Tibial artery (tissue), 4 donors: ENCODE measurements at regions of chr17 and their contacts with region 1.

Region 1: GRCh38 chr17:82648166-82648668 is at the start of gene WDR45B:
- DNase-seq: peak; percentile 94 to 97
- H3K4me3 ChIP-seq: peak within 1 kb of the TSS; percentile 91 to 92
- H3K27ac ChIP-seq: peak within 1 kb of the TSS; percentile 97 to 98
- H3K4me1 ChIP-seq: peaks cover 0 to 39% (median 23%) of the 10 kb centered on the region in 4 donors
- H3K27me3 ChIP-seq: no peaks in the 10 kb centered on the region
- CTCF ChIP-seq: no peak

Region 2: DNA sequence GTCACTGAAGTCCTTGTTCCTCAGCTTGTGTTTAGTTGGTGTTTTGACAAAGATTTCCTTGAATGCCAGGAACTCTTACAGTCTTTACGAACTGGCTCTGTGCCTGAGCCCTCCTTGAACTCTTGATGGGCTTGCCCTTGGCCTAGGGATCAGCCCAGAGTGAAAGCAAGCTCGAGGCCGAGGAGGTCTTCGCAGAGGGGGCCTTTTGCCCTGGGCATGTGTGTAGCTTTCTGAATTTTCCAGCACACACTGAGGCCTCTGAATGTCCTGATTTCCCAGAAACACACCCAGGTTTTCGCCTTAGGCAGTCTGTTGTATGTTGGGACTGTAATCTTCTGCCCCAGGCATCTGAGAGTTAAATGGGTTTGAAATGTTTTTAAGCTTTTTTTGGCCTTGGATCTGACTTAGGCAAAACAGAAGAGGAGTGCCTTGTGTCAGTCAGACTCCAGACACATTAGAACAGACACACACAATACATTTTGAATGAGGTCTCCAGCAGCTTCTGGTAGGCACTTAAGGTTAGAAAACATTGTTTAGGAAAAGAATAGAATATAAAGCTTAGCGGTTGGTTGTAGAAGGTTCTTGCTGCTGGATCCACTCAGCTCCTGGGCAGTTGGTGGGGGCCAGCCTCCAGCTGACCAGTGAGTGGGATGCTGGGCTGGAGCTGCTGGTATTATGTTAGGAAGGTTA is 111.6 kb before region 1 on chr17:
- intact Hi-C with region 1: no loop called
- DNase-seq: peak in 1 of 2 donors; percentile 63
- H3K4me3 ChIP-seq: peak overlapping the region; percentile 11 to 36
- H3K27ac ChIP-seq: peak overlapping the region; percentile 86 to 96
- H3K4me1 ChIP-seq: peaks cover 5 to 83% (median 50%) of the 10 kb centered on the region in 4 donors
- H3K27me3 ChIP-seq: no peaks in the 10 kb centered on the region
- CTCF ChIP-seq: no peak

Region 3: GRCh38 chr17:82611140-82612058 is 36.8 kb before region 1 on chr17:
- intact Hi-C with region 1: no loop called
- DNase-seq: no peak
- H3K4me3 ChIP-seq: no peak overlapping the region
- H3K27ac ChIP-seq: no peak overlapping the region
- H3K4me1 ChIP-seq: no peaks in the 10 kb centered on the region
- H3K27me3 ChIP-seq: no peaks in the 10 kb centered on the region
- CTCF ChIP-seq: no peak

Region 4: GRCh38 chr17:82751571-82752370 is 103.6 kb after region 1 on chr17 and contains the start of gene TBCD:
- intact Hi-C with region 1: loop called (anchors 5 kb)
- DNase-seq: peak; percentile 83 to 94
- H3K4me3 ChIP-seq: peak within 1 kb of the TSS; percentile 80 to 86
- H3K27ac ChIP-seq: peak within 1 kb of the TSS; percentile 81
- H3K4me1 ChIP-seq: peaks cover 0 to 25% (median 17%) of the 10 kb centered on the region in 4 donors
- H3K27me3 ChIP-seq: no peaks in the 10 kb centered on the region
- CTCF ChIP-seq: no peak